Mammary epithelial cell (primary cell): ENCODE measurements at regions of chr5 and their contacts with region 1.

Region 1: GRCh38 chr5:80125962-80126480 is 90.9 kb downstream of the THBS4 start:
- DNase-seq: peak; percentile 75
- H3K4me3 ChIP-seq: no peak overlapping the region
- H3K27ac ChIP-seq: no peak overlapping the region
- H3K4me1 ChIP-seq: peaks cover 5% of the 10 kb centered on the region
- H3K27me3 ChIP-seq: no peaks in the 10 kb centered on the region
- CTCF ChIP-seq: peak in 1 of 2 donors; percentile 10

Region 2: GRCh38 chr5:80255732-80256479 is 129.9 kb after region 1 on chr5 and contains the start of gene SERINC5:
- CTCF ChIA-PET with region 1: interaction called, 4 read pairs
- dilution Hi-C with region 1: no loop called
- in situ Hi-C with region 1: no loop called
- intact Hi-C with region 1: loop called (anchors 5 kb)
- DNase-seq: peak; percentile 79
- H3K4me3 ChIP-seq: peak within 1 kb of the TSS; percentile 70 to 97 (median 76)
- H3K27ac ChIP-seq: peak within 1 kb of the TSS; percentile 88
- H3K4me1 ChIP-seq: peaks cover 16% of the 10 kb centered on the region
- H3K27me3 ChIP-seq: no peaks in the 10 kb centered on the region
- CTCF ChIP-seq: no peak
- total RNA-seq, gene SERINC5: 35.5 to 43.1 TPM